ENCODE measurements at regions of chr3 and their contacts with region 1.

Region 1: DNA sequence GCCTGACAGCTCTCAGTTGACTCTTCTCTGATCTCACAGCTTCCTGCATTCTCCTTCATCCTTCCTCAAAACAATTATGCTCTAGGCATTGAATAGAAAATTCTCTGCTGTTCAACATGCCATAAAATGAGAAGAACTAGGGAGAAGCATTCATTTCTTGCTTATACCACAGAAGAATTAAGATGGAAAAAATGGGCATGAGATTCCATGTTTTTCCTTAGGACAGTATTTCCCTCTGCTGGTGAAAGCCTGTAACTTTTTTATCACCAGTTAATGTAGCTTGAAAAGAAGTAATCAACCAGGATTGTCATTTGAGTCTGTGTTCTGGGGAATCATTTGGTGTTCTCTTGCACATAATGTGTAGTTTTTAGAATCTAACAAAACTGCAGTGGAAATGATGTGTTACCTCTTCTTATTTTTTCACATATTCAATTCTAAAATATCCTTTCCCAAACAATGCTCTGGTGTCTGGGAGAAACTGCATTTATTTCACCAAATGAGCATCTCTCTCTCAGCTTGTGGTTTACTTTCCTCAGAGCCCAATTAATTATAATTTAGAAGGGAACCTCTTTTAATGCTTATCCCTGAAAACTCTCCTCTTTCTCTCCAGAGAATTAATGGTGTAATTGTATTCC is 92.8 kb upstream of the DCBLD2 start:
- DNase-seq: peak; percentile 49
- H3K4me3 ChIP-seq: no peak overlapping the region
- H3K27ac ChIP-seq: no peak overlapping the region
- H3K27me3 ChIP-seq: no peaks in the 10 kb centered on the region
- CTCF ChIP-seq: peak; percentile 77

Region 2: DNA sequence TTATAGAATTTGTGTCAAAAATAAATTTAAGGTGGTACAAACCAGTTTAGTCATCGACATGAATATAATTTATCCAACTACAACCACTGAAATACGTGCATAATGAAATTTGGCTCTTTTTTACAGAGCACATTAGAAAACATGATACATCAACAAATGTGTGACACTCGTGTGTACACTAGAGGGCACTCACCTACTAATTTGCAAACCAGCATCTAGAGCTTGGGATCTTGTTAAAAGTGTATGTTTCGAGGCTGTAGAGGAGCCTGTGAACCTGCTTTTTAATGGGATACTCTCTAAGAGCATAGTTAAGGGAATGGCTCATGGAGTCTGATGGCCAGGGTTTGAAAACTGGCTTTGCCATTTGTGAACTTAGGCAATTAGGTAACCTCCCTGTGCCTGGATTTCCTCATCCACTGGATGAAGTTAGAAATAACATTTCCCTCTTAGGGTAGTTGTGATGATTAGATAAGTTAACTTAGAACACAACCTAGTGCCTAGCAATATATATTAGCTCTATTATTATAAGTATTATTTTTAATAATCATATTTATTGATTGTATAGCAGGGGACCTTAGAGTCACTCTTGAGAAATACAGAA is 392.1 kb before region 1 on chr3:
- CTCF ChIA-PET with region 1: interaction called, 67 read pairs
- POLR2A ChIA-PET with region 1: no interaction called
- DNase-seq: peak; percentile 47
- H3K4me3 ChIP-seq: no peak overlapping the region
- H3K27ac ChIP-seq: no peak overlapping the region
- H3K27me3 ChIP-seq: no peaks in the 10 kb centered on the region
- CTCF ChIP-seq: peak; percentile 85

Region 3: GRCh38 chr3:98824256-98824655 is 170.0 kb before region 1 on chr3:
- CTCF ChIA-PET with region 1: interaction called, 61 read pairs
- POLR2A ChIA-PET with region 1: no interaction called
- DNase-seq: no peak
- H3K4me3 ChIP-seq: no peak overlapping the region
- H3K27ac ChIP-seq: no peak overlapping the region
- H3K27me3 ChIP-seq: no peaks in the 10 kb centered on the region
- CTCF ChIP-seq: no peak

Region 4: DNA sequence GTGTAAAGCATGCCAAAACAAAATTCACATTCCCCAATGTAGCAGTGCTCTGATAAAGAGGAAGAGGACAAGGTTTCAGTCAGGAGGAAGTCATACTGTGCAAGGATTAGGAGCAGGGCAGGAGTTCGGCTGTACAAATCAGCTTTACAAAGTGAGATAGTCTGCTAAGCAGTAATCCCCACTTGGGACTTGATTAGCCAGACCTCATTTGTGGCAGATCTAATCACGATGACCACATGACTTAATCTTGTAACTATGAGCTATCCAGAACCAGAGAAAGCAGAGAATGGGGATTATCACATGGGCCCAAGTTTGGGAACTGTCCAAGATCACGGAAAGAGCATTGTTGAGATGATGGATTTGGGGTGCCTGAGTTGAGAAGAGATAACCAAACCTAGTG is 100.5 kb before region 1 on chr3:
- CTCF ChIA-PET with region 1: interaction called, 16 read pairs
- POLR2A ChIA-PET with region 1: no interaction called
- DNase-seq: no peak
- H3K4me3 ChIP-seq: no peak overlapping the region
- H3K27ac ChIP-seq: no peak overlapping the region
- H3K27me3 ChIP-seq: no peaks in the 10 kb centered on the region
- CTCF ChIP-seq: no peak

Region 5: GRCh38 chr3:98980915-98981596 is 13.2 kb before region 1 on chr3:
- CTCF ChIA-PET with region 1: interaction called, 24 read pairs
- POLR2A ChIA-PET with region 1: no interaction called
- DNase-seq: no peak
- H3K4me3 ChIP-seq: peak overlapping the region; percentile 11; the same call in 1 of the 2 replicates
- H3K27ac ChIP-seq: no peak overlapping the region
- H3K27me3 ChIP-seq: no peaks in the 10 kb centered on the region
- CTCF ChIP-seq: no peak

Region 6: GRCh38 chr3:99172736-99173657 is 178.8 kb after region 1 on chr3:
- CTCF ChIA-PET with region 1: interaction called, 11 read pairs
- POLR2A ChIA-PET with region 1: no interaction called
- DNase-seq: peak; percentile 50
- H3K4me3 ChIP-seq: no peak overlapping the region
- H3K27ac ChIP-seq: no peak overlapping the region
- H3K27me3 ChIP-seq: no peaks in the 10 kb centered on the region
- CTCF ChIP-seq: peak; percentile 97

Measured in AG04450 (cell line).